ENCODE measurements at regions of chr1 and their contacts with region 1.

Region 1: DNA sequence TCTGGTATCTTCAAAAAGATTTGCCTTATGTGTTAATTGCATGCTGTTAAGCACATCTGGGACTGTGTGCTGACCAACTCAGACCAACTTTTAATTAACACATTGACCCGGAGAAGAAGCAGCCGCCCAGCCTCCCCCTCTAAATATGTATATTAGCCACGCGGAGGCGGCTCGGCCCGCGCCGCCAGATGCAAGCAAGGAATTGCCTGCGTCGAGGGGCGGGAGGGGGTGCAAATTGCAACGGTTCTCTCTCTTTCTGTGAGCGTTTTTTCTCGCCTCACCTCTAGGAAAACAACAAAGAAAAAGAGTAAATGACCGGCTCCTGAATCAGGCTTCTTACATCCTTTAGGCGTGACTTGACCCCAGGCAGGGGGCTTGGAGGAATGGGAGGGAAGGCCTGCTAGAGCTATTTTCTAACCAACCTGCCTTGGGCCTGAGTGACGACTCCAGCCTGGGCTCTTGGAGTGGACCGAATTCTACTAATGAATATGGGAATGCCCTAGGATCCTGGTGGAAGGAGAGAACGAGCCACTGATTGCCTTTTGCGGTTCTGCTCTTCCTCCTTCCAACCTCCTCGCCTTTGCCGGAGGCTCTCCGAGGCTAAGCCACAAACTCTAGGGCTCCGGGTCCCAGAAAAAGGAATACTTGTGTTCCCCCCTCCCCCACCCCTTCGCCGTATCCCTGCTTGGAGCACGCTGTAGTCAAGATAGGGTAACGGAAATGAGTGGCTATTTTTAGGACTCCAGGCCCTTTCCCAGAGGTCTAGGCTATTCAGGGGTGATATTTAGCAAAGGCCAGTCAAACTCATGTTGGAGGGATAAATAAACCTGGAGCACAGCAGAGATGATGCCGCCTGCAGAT is 417.0 kb upstream of the ESRRG start:
- DNase-seq: peak in 3 of 5 donors; percentile 21 to 50 (median 35)
- ATAC-seq: peak; percentile 76 to 91 (median 88)
- H3K4me3 ChIP-seq: peak overlapping the region in 10 of 12 donors; percentile 3 to 43 (median 32)
- H3K27ac ChIP-seq: peak overlapping the region in 9 of 12 donors; percentile 12 to 82 (median 63)
- H3K4me1 ChIP-seq: peaks cover 0 to 31% (median 0%) of the 10 kb centered on the region in 12 donors
- H3K27me3 ChIP-seq: peaks cover 0 to 60% (median 19%) of the 10 kb centered on the region in 9 donors
- CTCF ChIP-seq: no peak
- POLR2A ChIP-seq: no peak

Region 2: DNA sequence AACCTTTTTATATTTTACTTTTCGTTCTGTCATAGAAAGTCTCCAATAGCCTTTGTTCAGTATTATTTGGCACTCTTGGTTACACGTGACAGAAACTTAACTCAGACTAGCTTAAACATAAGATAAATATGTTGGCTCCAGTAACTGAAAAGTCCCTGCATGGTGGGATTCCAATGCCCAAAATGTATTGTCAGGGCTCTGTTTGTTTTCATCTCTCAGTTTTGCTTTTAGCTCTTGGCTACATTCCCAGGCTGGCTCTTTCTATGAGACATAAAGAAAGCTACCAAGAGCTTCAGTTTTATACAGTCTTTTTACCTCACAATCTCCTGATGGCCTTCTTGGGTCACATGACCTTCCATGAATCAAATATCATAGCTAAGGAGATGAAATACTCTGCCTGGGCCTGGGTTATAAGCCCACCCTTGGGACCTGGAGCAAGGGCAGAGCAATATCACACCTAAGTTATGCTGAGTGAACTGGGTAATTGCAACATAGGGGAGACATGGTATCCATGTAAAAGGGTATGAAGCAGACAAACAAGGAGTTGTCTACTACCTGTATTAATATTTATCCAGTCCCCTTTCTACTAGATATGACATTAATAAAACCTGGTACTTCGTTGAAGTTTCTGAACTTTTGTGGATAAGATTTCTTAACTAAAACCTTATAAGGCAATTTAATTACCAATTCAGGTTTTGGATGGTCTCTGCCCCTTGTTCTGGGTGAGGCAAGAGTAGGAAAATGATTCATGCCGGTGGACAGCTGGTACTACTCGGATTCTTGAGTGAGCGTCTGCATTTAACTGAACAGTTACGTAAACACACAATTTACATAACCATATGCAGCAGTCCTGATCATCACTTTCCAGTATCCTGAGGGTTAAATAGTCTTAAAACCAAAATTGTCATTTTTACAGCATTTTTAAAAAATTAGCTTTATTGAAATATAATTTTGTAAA is 48.3 kb after region 1 on chr1:
- intact Hi-C with region 1: loop called in 1 of 10 experiments (anchors 5 kb)
- DNase-seq: peak in 3 of 5 donors; percentile 26 to 51 (median 29)
- ATAC-seq: peak; percentile 65 to 85 (median 78)
- H3K4me3 ChIP-seq: no peak overlapping the region
- H3K27ac ChIP-seq: peak overlapping the region in 8 of 12 donors; percentile 39 to 78 (median 51)
- H3K4me1 ChIP-seq: peaks cover 0 to 9% (median 0%) of the 10 kb centered on the region in 12 donors
- H3K27me3 ChIP-seq: no peaks in the 10 kb centered on the region
- CTCF ChIP-seq: no peak
- POLR2A ChIP-seq: no peak